A673 (cell line): ENCODE measurements at regions of chr10 and their contacts with region 1.

Region 1: DNA sequence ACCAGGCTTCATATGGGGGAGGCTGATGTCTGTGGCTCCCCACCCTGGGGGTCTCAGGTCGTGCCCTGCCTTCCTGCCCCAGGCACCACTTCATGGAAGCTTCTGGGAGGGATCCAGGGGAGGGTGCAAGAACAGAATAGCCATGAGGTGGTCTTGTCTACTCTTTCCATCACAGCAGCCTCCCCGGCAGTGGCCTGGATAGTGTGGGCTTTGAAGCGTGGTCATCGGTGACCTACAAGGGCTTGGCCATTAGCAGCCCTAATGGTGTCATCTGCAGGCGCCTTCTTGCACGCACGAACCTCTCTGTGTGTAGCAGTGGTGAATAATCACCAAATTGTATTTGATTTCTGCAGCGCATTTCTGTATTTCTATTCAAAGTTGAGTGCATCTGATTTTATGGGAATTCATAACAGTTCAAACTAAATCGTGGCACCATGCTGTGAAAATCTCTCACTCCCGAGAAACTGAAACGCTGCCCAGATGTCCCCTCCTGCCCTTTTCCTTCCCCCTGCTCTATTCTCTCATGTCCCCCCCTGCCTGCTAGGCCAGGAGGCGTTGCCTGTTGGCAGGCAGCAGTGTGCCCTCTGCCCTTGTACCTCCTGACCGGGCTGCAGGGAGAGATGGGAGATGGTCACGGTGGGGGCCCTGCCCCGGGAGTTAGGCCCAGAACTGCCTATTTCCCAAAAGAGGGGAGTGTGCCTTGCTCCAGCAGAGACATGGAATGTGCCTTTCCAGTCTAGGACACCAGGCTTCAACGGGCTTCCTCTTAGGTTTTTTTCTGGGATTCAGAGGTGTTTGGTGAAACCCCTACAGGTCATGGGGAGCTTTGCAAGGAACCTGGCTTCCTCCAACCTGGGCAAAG is 34.8 kb downstream of the CDH23 start:
- DNase-seq: peak; percentile 65
- H3K4me3 ChIP-seq: peak overlapping the region; percentile 4
- H3K27ac ChIP-seq: peak overlapping the region; percentile 80
- H3K4me1 ChIP-seq: peaks cover 74% of the 10 kb centered on the region
- H3K27me3 ChIP-seq: no peaks in the 10 kb centered on the region
- CTCF ChIP-seq: peak; percentile 33

Region 2: GRCh38 chr10:71285180-71285545 is 146.3 kb before region 1 on chr10:
- CTCF ChIA-PET with region 1: no interaction called
- POLR2A ChIA-PET with region 1: no interaction called
- intact Hi-C with region 1: no loop called
- DNase-seq: peak; percentile 67
- H3K4me3 ChIP-seq: no peak overlapping the region
- H3K27ac ChIP-seq: no peak overlapping the region
- H3K4me1 ChIP-seq: peaks cover 10% of the 10 kb centered on the region
- H3K27me3 ChIP-seq: no peaks in the 10 kb centered on the region
- CTCF ChIP-seq: peak; percentile 81

Region 3: DNA sequence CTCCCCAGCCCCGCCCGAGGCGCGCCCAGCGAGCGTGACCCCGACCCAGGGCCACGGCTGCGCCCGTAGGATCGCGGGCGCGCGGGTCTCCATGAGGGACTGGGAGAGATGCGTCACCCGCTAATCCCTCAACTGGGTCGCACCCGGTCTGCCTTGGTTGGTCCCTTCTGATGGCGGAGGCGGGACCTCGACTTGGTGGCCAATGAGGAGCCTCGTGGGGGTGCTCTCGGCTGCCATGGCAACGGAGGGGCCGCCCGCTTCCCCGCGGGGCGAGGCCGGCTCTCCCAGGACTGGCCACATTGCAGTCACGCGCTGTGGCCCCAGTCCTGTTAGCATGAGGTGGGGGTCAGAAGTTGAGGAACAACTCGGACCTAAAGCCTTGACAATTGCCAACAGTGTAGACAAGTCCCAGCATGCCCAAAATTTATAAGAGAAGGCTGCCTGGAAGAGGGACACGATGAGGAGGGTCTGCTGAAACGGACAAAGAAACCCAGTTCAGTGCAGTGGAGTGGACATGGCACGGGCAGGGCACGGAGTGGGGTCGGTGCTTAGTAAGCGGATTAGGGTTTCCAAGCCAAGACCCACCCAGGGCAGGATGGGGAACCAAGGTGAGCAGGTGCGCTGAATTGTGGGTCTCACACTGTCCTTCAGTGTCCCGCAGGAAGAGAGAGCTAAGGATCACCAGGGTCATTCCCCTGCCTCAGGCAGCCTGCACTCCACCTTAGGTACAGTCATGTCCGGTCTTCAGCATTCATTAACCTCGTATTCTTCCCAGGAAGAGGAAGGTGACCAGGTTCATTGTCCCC is 866.7 kb after region 1 on chr10:
- CTCF ChIA-PET with region 1: no interaction called
- POLR2A ChIA-PET with region 1: interaction called, 11 read pairs
- intact Hi-C with region 1: no loop called
- DNase-seq: peak; percentile 99
- H3K4me3 ChIP-seq: peak overlapping the region; percentile 62
- H3K27ac ChIP-seq: peak overlapping the region; percentile 98
- H3K4me1 ChIP-seq: peaks cover 22% of the 10 kb centered on the region
- H3K27me3 ChIP-seq: no peaks in the 10 kb centered on the region
- CTCF ChIP-seq: no peak

Region 4: GRCh38 chr10:72483471-72483870 is 1052.0 kb after region 1 on chr10:
- CTCF ChIA-PET with region 1: no interaction called
- POLR2A ChIA-PET with region 1: no interaction called
- intact Hi-C with region 1: no loop called
- DNase-seq: no peak
- H3K4me3 ChIP-seq: no peak overlapping the region
- H3K27ac ChIP-seq: no peak overlapping the region
- H3K4me1 ChIP-seq: no peaks in the 10 kb centered on the region
- H3K27me3 ChIP-seq: no peaks in the 10 kb centered on the region
- CTCF ChIP-seq: no peak